ENCODE measurements at regions of chr11 and their contacts with region 1.

Region 1: DNA sequence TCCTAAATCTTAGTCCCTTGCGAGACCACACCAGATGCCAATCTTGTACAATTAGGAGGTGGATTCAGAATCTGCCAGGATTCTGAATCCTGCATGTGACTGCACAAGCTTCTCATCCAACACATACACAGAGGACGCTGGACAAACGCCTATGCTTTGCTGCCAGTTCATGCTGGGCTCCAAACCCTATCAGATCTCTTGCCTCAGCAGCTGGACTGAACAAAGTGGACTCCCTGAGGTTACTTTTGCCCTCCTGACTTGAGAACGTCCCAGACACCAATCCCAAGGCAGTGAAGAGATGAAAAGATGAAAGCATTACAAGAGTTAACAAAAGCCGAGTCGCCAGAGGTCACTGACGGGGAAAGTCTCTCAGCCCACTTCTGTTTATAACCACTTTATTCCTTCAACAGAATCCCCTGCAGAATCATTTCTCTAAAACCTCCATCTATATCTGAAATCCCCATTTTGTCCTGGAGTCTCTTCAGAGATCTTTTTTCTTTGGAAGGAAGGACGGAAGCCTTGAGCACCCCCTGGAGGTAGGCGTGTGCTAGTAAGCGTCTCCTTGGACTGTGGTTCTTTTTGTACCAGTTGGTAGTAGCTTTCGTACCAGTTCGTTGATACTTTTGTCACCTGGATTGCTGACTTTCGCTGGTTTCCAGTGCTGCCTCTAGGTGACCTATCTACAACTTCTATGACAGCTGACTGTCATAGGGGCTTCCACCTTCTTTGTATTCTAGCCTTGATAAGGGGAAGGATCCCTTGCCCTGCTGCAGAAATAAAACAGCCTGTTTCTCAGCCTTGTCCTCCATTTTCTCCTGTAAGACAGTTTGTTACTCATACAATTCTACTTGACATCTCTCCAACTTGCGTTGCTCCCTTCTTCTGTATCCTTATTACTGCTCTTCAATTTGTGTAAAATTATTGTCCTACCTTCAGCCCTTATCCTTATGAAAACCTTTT is 26.1 kb upstream of the EED start:
- DNase-seq: no peak
- H3K4me3 ChIP-seq: peak overlapping the region; percentile 2; the same call in 1 of the 2 replicates
- CTCF ChIP-seq: peak; percentile 83

Region 2: GRCh38 chr11:86015699-86016098 is 202.7 kb before region 1 on chr11:
- CTCF ChIA-PET with region 1: interaction called, 13 read pairs
- POLR2A ChIA-PET with region 1: no interaction called
- DNase-seq: no peak
- H3K4me3 ChIP-seq: no peak overlapping the region
- CTCF ChIP-seq: no peak

Region 3: DNA sequence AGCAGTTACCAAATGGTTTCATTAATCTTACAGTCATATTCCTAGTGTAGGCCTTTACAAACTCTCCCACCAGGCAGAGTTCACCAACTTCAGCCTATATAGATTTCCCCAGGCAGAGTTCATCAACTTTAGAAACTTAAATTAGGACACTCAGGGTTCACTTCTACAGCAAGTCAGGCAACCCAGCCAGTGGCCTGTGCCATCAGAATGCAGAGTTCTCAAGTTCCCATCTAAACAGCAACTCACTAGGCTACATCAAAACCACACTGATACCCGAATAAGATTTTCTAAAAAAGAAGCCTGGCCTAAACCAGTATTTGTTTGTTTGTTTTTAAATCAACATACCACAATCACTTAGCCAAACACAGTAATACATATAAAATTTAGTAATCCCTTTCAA is 183.2 kb before region 1 on chr11:
- CTCF ChIA-PET with region 1: interaction called, 80 read pairs
- POLR2A ChIA-PET with region 1: no interaction called
- DNase-seq: no peak
- H3K4me3 ChIP-seq: no peak overlapping the region
- CTCF ChIP-seq: no peak

Region 4: GRCh38 chr11:86193297-86194095 is 24.9 kb before region 1 on chr11:
- CTCF ChIA-PET with region 1: interaction called, 13 read pairs
- POLR2A ChIA-PET with region 1: no interaction called
- DNase-seq: no peak
- H3K4me3 ChIP-seq: no peak overlapping the region; the same call in 1 of the 2 replicates
- CTCF ChIP-seq: peak; percentile 72

Region 5: DNA sequence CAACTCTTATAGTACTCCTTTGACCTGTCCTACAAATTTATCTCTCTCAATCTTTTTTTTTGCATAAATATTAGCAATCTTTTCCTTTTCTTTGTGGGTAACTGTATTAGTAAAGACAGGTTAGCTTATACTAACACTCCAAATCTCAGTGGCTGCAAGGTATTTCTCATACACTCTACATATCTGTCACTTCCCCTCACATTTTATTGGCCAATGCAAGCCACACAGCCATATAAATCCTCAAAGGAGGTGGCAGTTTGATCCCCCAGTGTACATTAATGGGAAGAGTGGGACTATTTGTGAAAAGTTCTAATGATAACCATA is 16.4 kb before region 1 on chr11:
- CTCF ChIA-PET with region 1: interaction called, 19 read pairs
- POLR2A ChIA-PET with region 1: no interaction called
- DNase-seq: no peak
- H3K4me3 ChIP-seq: no peak overlapping the region
- CTCF ChIP-seq: no peak

Region 6: GRCh38 chr11:86230921-86231430 is 12.6 kb after region 1 on chr11:
- CTCF ChIA-PET with region 1: interaction called, 53 read pairs
- POLR2A ChIA-PET with region 1: no interaction called
- DNase-seq: no peak
- H3K4me3 ChIP-seq: no peak overlapping the region
- CTCF ChIP-seq: no peak

Region 7: DNA sequence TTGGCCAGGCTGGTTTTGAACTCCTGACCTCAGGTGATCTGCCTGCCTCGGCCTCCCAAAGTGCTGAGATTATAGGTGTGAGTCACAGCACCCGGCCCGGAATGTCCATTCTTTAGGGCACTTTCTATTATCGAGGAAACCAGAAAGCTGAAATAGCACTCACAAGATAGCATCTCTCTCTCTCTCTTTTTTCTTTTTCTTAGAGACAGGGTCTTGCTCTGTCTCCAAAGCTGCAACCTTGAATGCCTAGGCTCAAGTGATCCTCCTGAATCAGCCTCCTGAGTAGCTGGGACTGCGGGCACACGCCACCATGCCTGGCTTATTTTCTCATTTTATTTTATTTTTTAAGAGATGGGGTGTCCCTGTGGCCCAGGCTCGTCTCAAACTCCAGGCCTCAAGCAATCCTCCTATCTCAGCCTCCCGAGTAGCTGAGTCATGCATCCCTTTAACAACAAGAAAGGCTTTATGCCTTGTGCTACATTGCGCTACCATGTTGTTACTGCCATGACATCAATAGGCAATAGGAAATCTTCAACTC is 18.9 kb after region 1 on chr11:
- CTCF ChIA-PET with region 1: interaction called, 53 read pairs
- POLR2A ChIA-PET with region 1: no interaction called
- DNase-seq: no peak
- H3K4me3 ChIP-seq: no peak overlapping the region
- CTCF ChIP-seq: no peak